ENCODE measurements at regions of chr2 and their contacts with region 1.

Region 1: GRCh38 chr2:74334931-74335333 is 8.3 kb downstream of the SLC4A5 start:
- DNase-seq: peak; percentile 79 to 85
- H3K4me3 ChIP-seq: no peak overlapping the region
- H3K4me3 Mint-ChIP-seq: no peak overlapping the region
- H3K27ac Mint-ChIP-seq: no peak overlapping the region
- H3K4me1 ChIP-seq: no peaks in the 10 kb centered on the region
- H3K4me1 Mint-ChIP-seq: no peaks in the 10 kb centered on the region
- H3K27me3 ChIP-seq: no peaks in the 10 kb centered on the region
- H3K27me3 Mint-ChIP-seq: no peaks in the 10 kb centered on the region
- CTCF ChIP-seq: peak; percentile 97

Region 2: DNA sequence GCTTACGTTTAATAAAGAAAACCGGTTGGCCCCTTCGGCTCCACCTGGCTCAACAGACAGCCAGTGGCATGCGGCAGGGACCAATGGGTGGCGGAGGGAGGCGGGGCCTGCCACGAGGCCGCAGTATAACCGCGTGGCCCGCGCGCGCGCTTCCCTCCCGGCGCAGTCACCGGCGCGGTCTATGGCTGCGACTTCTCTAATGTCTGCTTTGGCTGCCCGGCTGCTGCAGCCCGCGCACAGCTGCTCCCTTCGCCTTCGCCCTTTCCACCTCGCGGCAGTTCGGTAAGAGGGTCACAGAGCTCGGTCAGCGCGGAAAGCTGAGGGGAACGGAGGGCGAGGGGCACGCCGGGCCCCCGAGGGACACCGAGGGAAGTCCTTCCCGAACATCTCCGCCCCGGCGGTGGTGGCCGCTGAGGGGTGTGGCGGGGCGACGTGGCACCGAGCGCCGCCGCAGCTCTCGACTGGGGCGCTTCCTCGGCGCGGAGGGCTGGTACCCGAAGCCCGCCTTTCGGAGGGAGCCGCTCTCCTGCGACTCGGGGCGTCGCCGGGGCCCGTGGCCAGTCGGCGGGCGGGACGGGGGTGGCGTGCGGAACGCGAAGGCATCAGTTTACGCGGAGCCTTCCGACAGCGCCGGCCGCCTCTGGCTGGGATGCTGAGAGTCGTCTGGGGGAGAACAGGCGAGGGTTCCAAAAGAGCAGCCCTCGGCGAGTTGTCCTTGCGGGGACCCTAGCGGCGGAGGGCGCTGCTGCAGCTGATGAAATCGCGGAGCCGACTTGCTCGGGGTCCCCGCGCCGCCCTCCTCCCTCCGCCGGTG is 136.3 kb before region 1 on chr2 and contains the start of gene MTHFD2:
- CTCF ChIA-PET with region 1: no interaction called
- POLR2A ChIA-PET with region 1: no interaction called
- intact Hi-C with region 1: no loop called
- DNase-seq: peak; percentile 98
- H3K4me3 ChIP-seq: peak within 1 kb of the TSS; percentile 80
- H3K4me3 Mint-ChIP-seq: peak within 1 kb of the TSS; percentile 91
- H3K27ac Mint-ChIP-seq: peak within 1 kb of the TSS; percentile 100
- H3K4me1 ChIP-seq: peaks cover 12% of the 10 kb centered on the region
- H3K4me1 Mint-ChIP-seq: peaks cover 26% of the 10 kb centered on the region
- H3K27me3 ChIP-seq: no peaks in the 10 kb centered on the region
- H3K27me3 Mint-ChIP-seq: no peaks in the 10 kb centered on the region
- CTCF ChIP-seq: peak; percentile 90
- total RNA-seq, gene MTHFD2: 416 and 470 TPM in 2 replicates

Region 3: GRCh38 chr2:74250189-74250631 is 84.7 kb before region 1 on chr2:
- CTCF ChIA-PET with region 1: interaction called, 31 read pairs
- POLR2A ChIA-PET with region 1: no interaction called
- intact Hi-C with region 1: loop called (anchors 1 kb)
- DNase-seq: peak; percentile 44 to 55
- H3K4me3 ChIP-seq: no peak overlapping the region
- H3K4me3 Mint-ChIP-seq: no peak overlapping the region
- H3K27ac Mint-ChIP-seq: no peak overlapping the region
- H3K4me1 ChIP-seq: no peaks in the 10 kb centered on the region
- H3K4me1 Mint-ChIP-seq: no peaks in the 10 kb centered on the region
- H3K27me3 ChIP-seq: no peaks in the 10 kb centered on the region
- H3K27me3 Mint-ChIP-seq: no peaks in the 10 kb centered on the region
- CTCF ChIP-seq: peak; percentile 85 to 86

Region 4: GRCh38 chr2:74267068-74267467 is 67.9 kb before region 1 on chr2:
- CTCF ChIA-PET with region 1: interaction called, 6 read pairs
- POLR2A ChIA-PET with region 1: no interaction called
- intact Hi-C with region 1: loop called (anchors 1 kb)
- DNase-seq: peak in 1 of 2 experiments; percentile 62
- H3K4me3 ChIP-seq: no peak overlapping the region
- H3K4me3 Mint-ChIP-seq: no peak overlapping the region
- H3K27ac Mint-ChIP-seq: no peak overlapping the region
- H3K4me1 ChIP-seq: no peaks in the 10 kb centered on the region
- H3K4me1 Mint-ChIP-seq: no peaks in the 10 kb centered on the region
- H3K27me3 ChIP-seq: no peaks in the 10 kb centered on the region
- H3K27me3 Mint-ChIP-seq: no peaks in the 10 kb centered on the region
- CTCF ChIP-seq: peak; percentile 47 to 75

Measured in Caco-2 (cell line).